Activated CD4-positive, alpha-beta T cell treated with anti-CD3 and anti-CD28 coated beads for 36 hours (primary cell): ENCODE measurements at regions of chr17 and their contacts with region 1.

Region 1: DNA sequence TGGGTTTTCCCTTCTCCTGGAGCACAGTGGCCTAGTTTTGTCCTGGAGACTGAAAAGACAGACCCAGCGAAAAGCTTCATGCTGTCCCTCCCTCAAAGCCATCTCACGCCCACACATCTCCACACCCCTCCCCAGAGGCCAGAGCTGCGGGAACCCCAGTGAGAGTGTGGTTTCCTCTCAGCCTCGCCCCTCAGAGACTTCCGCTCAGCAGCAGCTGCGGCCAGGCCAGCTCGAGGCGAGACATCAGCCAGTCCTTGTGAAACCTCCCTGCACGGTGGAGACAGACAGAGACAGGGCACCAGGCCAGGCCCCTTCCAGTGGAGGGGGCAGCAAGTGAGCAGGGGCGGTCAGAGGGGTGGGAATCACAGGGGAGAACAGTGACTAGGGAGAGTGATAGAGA is 77.0 kb upstream of the TNRC6C start:
- DNase-seq: peak; percentile 78
- ATAC-seq: peak; percentile 40
- H3K4me3 Mint-ChIP-seq: peak overlapping the region; percentile 43
- H3K27ac Mint-ChIP-seq: peak overlapping the region; percentile 90
- H3K4me1 Mint-ChIP-seq: peaks cover 77% of the 10 kb centered on the region
- H3K27me3 Mint-ChIP-seq: no peaks in the 10 kb centered on the region

Region 2: GRCh38 chr17:77666881-77667395 is 214.6 kb before region 1 on chr17:
- CTCF ChIA-PET with region 1: no interaction called
- POLR2A ChIA-PET with region 1: no interaction called
- intact Hi-C with region 1: loop called in 1 of 2 experiments (anchors 5 kb)
- DNase-seq: peak; percentile 84
- ATAC-seq: peak; percentile 86
- H3K4me3 Mint-ChIP-seq: peak overlapping the region; percentile 75
- H3K27ac Mint-ChIP-seq: peak overlapping the region; percentile 100
- H3K4me1 Mint-ChIP-seq: peaks cover 32% of the 10 kb centered on the region
- H3K27me3 Mint-ChIP-seq: no peaks in the 10 kb centered on the region

Region 3: DNA sequence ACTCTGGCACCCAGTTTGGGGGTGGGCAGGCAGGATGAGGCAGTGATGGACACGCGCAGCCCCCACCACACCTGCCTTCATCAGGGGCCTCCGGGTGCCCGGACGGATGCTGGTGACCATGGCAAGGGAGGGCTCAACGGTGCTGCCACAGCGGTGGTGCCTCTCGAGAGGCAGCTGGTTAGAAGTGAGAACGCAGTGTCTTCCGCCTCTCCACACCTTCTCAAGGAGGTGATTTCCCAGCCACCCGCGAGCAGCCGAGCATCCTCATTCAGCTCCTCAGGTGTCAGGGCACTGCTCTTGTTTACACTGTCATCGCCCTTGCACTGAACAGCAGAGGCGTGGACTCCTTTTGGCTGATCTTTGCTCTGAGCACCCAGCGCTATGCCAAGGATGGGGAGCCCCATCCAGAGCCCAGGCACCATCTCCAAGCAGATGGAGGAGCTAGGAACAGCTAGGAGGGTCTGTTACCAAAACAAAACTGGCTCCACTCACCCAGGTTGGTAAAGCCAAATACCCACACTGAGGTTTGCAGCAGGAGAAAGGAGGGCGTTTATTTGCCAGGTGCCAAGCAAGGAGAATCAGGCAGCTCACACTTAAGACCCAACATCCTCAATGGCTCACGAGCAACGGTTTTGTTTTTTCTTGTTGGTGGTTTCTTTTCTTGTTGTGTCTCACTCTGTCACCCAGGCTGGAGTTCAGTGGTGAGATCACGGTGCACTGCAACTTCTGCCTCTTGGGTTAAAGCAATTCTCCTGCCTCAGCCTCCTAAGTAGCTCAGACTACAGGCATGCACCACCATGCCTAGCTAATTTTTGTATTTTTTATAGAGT is 97.3 kb before region 1 on chr17:
- CTCF ChIA-PET with region 1: no interaction called
- POLR2A ChIA-PET with region 1: no interaction called
- intact Hi-C with region 1: loop called in 1 of 2 experiments (anchors 2 kb)
- DNase-seq: peak; percentile 83
- ATAC-seq: peak; percentile 94
- H3K4me3 Mint-ChIP-seq: peak overlapping the region; percentile 55
- H3K27ac Mint-ChIP-seq: peak overlapping the region; percentile 75
- H3K4me1 Mint-ChIP-seq: peaks cover 21% of the 10 kb centered on the region
- H3K27me3 Mint-ChIP-seq: no peaks in the 10 kb centered on the region

Region 4: GRCh38 chr17:78852709-78853121 is 971.2 kb after region 1 on chr17:
- CTCF ChIA-PET with region 1: no interaction called
- POLR2A ChIA-PET with region 1: no interaction called
- intact Hi-C with region 1: no loop called
- DNase-seq: no peak
- ATAC-seq: no peak
- H3K4me3 Mint-ChIP-seq: no peak overlapping the region
- H3K27ac Mint-ChIP-seq: no peak overlapping the region
- H3K4me1 Mint-ChIP-seq: no peaks in the 10 kb centered on the region
- H3K27me3 Mint-ChIP-seq: no peaks in the 10 kb centered on the region